ENCODE measurements at regions of chr4 and their contacts with region 1.

Region 1: GRCh38 chr4:102760645-102761295 is at the start of gene MANBA:
- DNase-seq: peak; percentile 82
- H3K4me3 ChIP-seq: peak within 1 kb of the TSS; percentile 83
- H3K4me3 Mint-ChIP-seq: peak within 1 kb of the TSS; percentile 80
- H3K27ac Mint-ChIP-seq: peak within 1 kb of the TSS; percentile 76
- H3K4me1 ChIP-seq: peaks cover 7% of the 10 kb centered on the region
- H3K4me1 Mint-ChIP-seq: peaks cover 19% of the 10 kb centered on the region
- H3K27me3 ChIP-seq: no peaks in the 10 kb centered on the region
- H3K27me3 Mint-ChIP-seq: no peaks in the 10 kb centered on the region
- CTCF ChIP-seq: no peak
- total RNA-seq, gene MANBA: 52.1 and 53.5 TPM in 2 replicates

Region 2: DNA sequence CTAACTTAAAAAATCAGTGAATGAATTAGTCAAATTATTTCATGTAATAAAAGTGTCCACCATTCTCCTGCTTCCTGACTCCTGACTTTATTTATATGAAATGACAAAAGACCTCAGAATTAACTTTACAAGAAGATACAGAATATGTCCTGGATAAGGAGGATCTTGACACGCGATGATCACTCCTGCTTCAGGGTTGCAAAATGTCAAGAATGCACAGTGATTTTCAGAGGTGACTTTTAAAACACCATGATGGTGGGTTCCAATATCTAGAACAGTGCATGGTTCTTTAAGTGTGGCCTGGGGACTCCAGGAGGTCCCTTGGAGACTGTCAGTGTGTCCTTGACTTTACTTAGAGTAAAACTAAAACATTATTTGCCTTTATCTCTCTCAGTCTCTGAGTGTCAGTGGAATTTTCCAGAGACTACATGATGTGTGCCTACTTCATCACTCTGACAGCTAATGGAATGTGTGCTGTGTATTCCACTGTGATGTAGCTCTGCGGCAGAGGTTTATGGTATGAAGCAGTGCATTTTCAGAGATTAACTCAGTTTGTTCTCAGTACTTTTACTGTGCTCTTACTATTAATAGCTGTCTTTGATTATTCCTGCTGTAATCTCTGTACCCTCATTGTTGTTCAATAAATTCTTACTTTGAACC is 85.8 kb before region 1 on chr4:
- CTCF ChIA-PET with region 1: no interaction called
- POLR2A ChIA-PET with region 1: interaction called, 3 read pairs
- intact Hi-C with region 1: loop called (anchors 2 kb)
- DNase-seq: peak; percentile 68 to 69
- H3K4me3 ChIP-seq: no peak overlapping the region
- H3K4me3 Mint-ChIP-seq: no peak overlapping the region
- H3K27ac Mint-ChIP-seq: peak overlapping the region; percentile 87
- H3K4me1 ChIP-seq: peaks cover 60% of the 10 kb centered on the region
- H3K4me1 Mint-ChIP-seq: peaks cover 15% of the 10 kb centered on the region
- H3K27me3 ChIP-seq: no peaks in the 10 kb centered on the region
- H3K27me3 Mint-ChIP-seq: no peaks in the 10 kb centered on the region
- CTCF ChIP-seq: no peak

Region 3: DNA sequence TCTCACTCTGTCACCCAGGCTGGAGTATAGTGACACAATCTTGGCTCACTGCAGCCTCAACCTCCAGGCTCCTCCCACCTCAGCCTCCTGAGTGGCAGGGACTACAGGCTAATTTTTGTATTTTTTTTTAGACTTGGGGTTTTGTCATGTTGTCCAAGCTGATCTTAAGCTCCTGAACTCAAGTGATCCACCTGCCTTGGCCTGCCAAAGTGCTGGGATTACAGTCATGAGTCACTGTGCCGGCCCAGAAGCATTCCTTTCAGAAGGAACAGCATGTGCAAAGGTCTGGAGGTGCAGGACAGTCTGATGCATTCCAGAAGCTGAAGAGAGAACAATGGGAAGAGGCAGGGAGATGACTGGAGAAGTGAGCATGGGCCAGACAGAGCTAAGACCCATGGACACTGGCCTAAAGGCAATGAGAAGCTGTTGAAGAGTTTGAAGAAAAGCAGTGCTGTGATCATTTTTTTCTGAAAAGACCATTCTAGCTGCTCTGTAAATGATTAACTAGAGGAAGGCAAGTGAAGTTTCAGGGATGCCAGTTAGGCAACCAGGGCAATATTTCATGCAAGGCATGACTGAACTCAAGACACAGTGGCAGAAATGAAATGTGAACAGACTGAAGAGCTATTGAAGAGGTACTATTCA is 43.2 kb before region 1 on chr4:
- CTCF ChIA-PET with region 1: no interaction called
- POLR2A ChIA-PET with region 1: no interaction called
- intact Hi-C with region 1: loop called (anchors 1 kb)
- DNase-seq: peak; percentile 38 to 56
- H3K4me3 ChIP-seq: no peak overlapping the region
- H3K4me3 Mint-ChIP-seq: peak overlapping the region; percentile 1
- H3K27ac Mint-ChIP-seq: peak overlapping the region; percentile 25
- H3K4me1 ChIP-seq: peaks cover 35% of the 10 kb centered on the region
- H3K4me1 Mint-ChIP-seq: peaks cover 25% of the 10 kb centered on the region
- H3K27me3 ChIP-seq: no peaks in the 10 kb centered on the region
- H3K27me3 Mint-ChIP-seq: no peaks in the 10 kb centered on the region
- CTCF ChIP-seq: no peak

Region 4: DNA sequence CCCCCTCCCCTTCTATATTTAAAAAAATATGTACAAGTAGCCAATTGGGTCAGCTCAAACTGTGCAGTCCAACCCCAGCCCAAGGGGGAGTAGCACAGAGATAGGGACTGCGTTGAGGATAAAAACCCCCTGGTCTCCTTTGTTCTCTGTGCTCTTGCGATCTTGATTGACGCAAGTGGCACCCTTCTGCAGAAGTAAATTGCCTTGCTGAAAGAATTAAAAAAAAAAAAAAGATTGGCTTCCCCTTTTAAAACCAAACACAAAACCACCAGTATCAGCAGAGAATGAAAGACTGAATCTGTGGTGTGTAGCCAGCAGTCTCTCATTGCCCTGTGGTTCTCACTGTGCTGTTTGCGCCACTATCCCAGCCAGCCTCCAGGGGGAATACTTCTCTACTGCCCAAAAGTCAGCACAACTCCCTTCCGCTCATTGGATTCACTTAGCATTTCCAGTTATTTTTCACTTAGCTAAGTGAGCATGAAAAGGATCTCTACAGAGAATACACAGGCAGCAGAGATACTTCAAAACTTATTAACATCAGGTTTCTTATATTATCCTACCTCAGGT is 29.7 kb before region 1 on chr4:
- CTCF ChIA-PET with region 1: no interaction called
- POLR2A ChIA-PET with region 1: no interaction called
- intact Hi-C with region 1: no loop called
- DNase-seq: no peak
- H3K4me3 ChIP-seq: no peak overlapping the region
- H3K4me3 Mint-ChIP-seq: no peak overlapping the region
- H3K27ac Mint-ChIP-seq: no peak overlapping the region
- H3K4me1 ChIP-seq: peaks cover 15% of the 10 kb centered on the region
- H3K4me1 Mint-ChIP-seq: peaks cover 24% of the 10 kb centered on the region
- H3K27me3 ChIP-seq: no peaks in the 10 kb centered on the region
- H3K27me3 Mint-ChIP-seq: no peaks in the 10 kb centered on the region
- CTCF ChIP-seq: no peak

Region 5: GRCh38 chr4:102789317-102789717 is 28.5 kb after region 1 on chr4:
- CTCF ChIA-PET with region 1: no interaction called
- POLR2A ChIA-PET with region 1: no interaction called
- intact Hi-C with region 1: loop called (anchors 2 kb)
- DNase-seq: no peak
- H3K4me3 ChIP-seq: no peak overlapping the region
- H3K4me3 Mint-ChIP-seq: no peak overlapping the region
- H3K27ac Mint-ChIP-seq: no peak overlapping the region
- H3K4me1 ChIP-seq: 0 out of 2 replicates have a peak, but pooled peaks cover 4% of the 10 kb centered on the region
- H3K4me1 Mint-ChIP-seq: peaks cover 7% of the 10 kb centered on the region
- H3K27me3 ChIP-seq: no peaks in the 10 kb centered on the region
- H3K27me3 Mint-ChIP-seq: no peaks in the 10 kb centered on the region
- CTCF ChIP-seq: no peak